ENCODE measurements at regions of chr4 and their contacts with region 1.

Region 1: DNA sequence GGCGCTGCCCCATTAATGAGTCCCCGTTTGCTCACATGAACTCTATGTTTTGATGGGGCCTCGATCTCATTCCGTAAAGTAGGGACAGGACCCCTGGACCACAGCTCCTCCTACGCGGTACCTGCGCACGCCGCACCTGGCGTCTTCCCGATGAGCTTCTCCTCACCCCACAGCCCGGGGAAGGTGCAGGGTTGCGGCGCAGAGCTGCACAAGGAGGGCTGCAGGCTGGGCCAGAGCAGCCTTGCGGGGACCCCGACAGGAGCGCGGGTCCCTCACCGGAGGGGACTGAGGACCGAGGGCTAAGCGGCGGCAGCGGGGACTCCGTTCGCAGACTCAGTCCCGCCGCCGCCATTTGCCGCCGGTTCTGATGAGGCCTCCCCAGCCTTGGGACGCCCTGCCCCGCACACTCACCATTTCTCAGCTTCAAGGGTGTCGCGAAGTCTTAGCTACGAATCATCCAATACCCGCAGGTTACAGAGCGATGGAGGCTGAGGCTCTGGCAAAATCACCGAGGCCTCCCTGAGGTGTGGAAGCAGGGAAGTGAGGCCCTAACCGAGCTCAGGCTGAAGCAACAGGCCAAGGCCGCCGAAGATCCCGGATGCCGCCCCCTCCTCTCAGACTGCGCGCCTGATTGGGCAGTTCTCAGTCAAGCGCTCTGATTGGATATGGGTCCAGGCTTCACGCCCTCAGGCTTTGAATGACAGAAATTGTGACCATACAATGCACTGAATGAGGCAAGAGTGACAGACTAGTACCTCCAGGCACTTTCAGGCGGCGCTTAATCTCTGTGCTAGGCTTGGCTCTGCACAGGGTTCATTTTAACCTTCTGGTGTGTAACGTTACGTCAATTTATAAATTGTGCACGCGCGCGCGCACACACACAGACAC is 25.1 kb downstream of the ZNF721 start:
- DNase-seq: peak; percentile 71 to 97 (median 96)
- ATAC-seq: peak; percentile 95 to 98
- H3K4me3 Mint-ChIP-seq: peak overlapping the region; percentile 82 to 100 (median 99)
- H3K27ac Mint-ChIP-seq: peak overlapping the region; percentile 99 to 100 (median 99)
- H3K4me1 Mint-ChIP-seq: peaks cover 18 to 54% (median 22%) of the 10 kb centered on the region in 4 donors
- H3K27me3 Mint-ChIP-seq: no peaks in the 10 kb centered on the region

Region 2: DNA sequence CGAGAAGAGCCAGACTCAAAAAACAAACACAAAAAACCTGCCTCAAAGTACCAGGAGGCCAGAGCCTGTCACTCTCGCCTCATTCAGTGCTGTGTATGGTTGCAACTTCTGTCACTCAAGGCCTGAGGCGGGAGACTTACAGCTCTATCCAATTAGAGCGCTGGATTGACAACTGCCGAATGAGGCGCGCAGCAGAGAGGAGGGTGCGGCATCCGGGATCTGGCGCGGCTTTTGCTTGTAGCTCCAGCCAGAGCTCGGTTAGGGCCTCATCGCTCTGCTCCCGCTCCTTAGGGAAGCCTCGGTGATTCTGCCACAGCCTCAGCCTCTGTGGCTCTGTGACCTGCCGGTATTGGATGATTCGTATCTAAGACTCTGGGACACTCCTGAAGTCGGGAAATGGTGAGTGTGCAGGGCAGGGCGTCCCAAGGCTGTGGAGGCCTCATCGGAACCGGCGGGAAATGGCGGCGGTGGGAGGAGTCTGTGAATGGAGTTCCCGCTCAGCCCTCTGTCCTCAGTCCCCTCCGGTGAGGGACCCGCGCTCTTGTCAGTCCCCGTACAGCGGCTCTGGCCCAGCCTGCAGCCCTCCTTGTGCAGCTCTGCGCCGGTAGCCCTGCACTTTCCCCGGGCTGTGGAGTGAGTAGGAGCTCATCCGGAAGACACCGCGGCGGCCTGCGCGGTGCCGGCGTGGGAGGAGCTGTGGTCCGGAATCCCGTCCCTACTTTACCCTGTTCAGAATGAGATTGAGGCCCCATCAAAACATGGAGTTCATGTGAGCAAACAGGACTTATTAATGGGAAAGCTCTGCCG is 349.3 kb before region 1 on chr4 and contains the start of gene ZNF718:
- POLR2A ChIA-PET with region 1: interaction called, 10 read pairs
- DNase-seq: peak; percentile 75 to 96 (median 91)
- ATAC-seq: peak; percentile 93 to 96
- H3K4me3 Mint-ChIP-seq: peak within 1 kb of the TSS; percentile 94 to 100 (median 98)
- H3K27ac Mint-ChIP-seq: peak within 1 kb of the TSS; percentile 96 to 100 (median 98)
- H3K4me1 Mint-ChIP-seq: peaks cover 14 to 46% (median 41%) of the 10 kb centered on the region in 4 donors
- H3K27me3 Mint-ChIP-seq: no peaks in the 10 kb centered on the region
- polyA plus RNA-seq, gene ZNF718: 4.7 to 5.4 (median 5.1) TPM

Region 3: GRCh38 chr4:337143-337931 is 136.5 kb before region 1 on chr4 and contains the start of gene ZNF141:
- POLR2A ChIA-PET with region 1: interaction called, 29 read pairs
- DNase-seq: peak; percentile 76 to 96 (median 92)
- ATAC-seq: peak; percentile 91 to 92
- H3K4me3 Mint-ChIP-seq: peak within 1 kb of the TSS; percentile 94 to 100 (median 99)
- H3K27ac Mint-ChIP-seq: peak within 1 kb of the TSS; percentile 95 to 100 (median 99)
- H3K4me1 Mint-ChIP-seq: peaks cover 19 to 42% (median 37%) of the 10 kb centered on the region in 4 donors
- H3K27me3 Mint-ChIP-seq: peaks cover 0 to 2% (median 0%) of the 10 kb centered on the region in 5 donors
- polyA plus RNA-seq, gene ZNF141: 11.6 to 16.4 (median 12.3) TPM

Region 4: DNA sequence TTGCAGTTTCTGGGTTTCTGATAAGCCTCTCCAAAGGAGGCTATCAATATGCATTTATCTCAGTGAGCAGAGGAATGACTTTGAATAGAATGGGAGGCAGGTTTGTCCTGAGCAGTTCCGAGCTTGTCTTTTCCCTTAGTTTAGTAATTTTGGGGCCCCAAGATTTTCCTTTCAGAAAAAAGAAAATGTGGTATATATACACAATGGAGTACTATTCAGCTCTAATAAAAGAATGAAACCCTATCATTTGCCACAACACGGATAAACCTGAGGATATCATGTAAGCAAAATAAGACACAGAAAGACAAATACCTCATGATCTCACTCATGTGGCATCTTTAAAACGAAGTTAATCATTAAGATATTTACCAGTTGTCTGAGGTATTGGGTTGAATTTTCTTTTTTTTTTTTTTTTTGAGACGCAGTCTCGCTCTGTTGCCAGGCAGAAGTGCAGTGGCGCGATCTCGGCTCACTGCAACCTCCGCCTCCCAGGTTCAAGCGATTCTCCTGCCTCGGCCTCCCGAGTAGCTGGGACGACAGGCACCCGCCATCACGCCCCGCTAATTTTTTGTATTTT is 24.6 kb after region 1 on chr4:
- POLR2A ChIA-PET with region 1: interaction called, 46 read pairs
- DNase-seq: no peak
- ATAC-seq: peak; percentile 32 to 62
- H3K4me3 Mint-ChIP-seq: peak overlapping the region; percentile 86 to 98 (median 94)
- H3K27ac Mint-ChIP-seq: peak overlapping the region; percentile 93 to 98 (median 96)
- H3K4me1 Mint-ChIP-seq: peaks cover 18 to 55% (median 47%) of the 10 kb centered on the region in 4 donors
- H3K27me3 Mint-ChIP-seq: no peaks in the 10 kb centered on the region